ENCODE measurements at regions of chr20 and their contacts with region 1.

Region 1: DNA sequence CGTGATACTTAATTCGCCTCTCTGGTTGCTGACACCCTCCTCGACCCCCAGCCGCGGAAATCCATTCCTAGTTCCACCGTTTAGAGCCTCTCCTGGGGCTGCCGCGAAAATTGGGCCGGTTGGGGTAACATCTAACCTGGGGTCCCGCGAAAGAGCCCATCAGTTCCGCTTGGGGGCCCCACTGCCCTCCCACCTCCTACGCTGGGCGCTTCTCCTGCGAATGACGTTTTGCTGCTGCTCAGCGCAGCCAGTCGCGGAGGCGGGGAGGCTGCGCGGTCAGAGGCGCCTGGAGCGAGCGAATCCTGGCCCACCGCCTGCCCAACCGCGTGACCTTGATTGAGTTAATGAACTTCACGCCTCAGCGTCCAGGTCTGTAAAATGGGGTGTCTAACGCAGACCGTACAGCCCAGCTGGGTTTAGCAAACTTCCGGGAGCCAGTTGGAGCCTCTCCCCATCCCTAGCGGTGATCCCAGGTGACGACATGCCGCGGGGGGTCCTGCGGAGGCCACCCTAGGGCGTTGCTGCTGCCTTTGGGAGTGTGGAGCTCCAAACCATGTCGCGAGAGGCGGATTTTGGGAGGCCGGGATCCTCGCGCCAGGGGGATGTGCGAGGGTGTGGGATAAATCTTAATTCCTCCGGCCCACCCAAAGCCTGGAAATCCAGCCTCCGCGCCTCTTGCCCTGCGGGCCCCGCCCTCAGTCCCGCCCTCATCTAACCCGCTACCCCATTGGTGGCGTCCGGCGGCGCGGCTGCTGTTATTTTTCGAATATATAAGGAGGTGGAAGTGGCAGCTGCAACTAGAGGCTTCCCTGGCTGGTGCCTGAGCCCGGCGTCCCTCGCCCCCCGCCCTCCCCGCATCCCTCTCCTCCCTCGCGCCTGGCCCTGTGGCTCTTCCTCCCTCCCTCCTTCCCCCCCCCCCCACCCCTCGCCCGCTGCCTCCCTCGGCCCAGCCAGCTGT is at the start of gene CDC25B:
- DNase-seq: peak; percentile 80 to 94 (median 92)
- ATAC-seq: peak; percentile 77
- H3K4me3 ChIP-seq: peak within 1 kb of the TSS; percentile 95 to 98
- H3K4me3 Mint-ChIP-seq: peak within 1 kb of the TSS; percentile 98
- H3K27ac ChIP-seq: peak within 1 kb of the TSS; percentile 95 to 99
- H3K27ac Mint-ChIP-seq: peak within 1 kb of the TSS; percentile 98
- H3K4me1 ChIP-seq: peaks cover 37% of the 10 kb centered on the region
- H3K4me1 Mint-ChIP-seq: peaks cover 42% of the 10 kb centered on the region
- H3K27me3 ChIP-seq: no peaks in the 10 kb centered on the region
- H3K27me3 Mint-ChIP-seq: no peaks in the 10 kb centered on the region
- CTCF ChIP-seq: peak; percentile 60
- total RNA-seq, gene CDC25B: 135 to 140 TPM

Region 2: GRCh38 chr20:3670511-3670910 is 125.3 kb before region 1 on chr20:
- CTCF ChIA-PET with region 1: no interaction called
- POLR2A ChIA-PET with region 1: no interaction called
- intact Hi-C with region 1: no loop called
- DNase-seq: no peak
- ATAC-seq: no peak
- H3K4me3 ChIP-seq: no peak overlapping the region
- H3K4me3 Mint-ChIP-seq: no peak overlapping the region
- H3K27ac ChIP-seq: no peak overlapping the region
- H3K27ac Mint-ChIP-seq: no peak overlapping the region
- H3K4me1 ChIP-seq: peaks cover 9% of the 10 kb centered on the region
- H3K4me1 Mint-ChIP-seq: peaks cover 17% of the 10 kb centered on the region
- H3K27me3 ChIP-seq: peaks cover 0 to 10% of the 10 kb centered on the region in 2 experiments
- H3K27me3 Mint-ChIP-seq: peaks cover 40% of the 10 kb centered on the region
- CTCF ChIP-seq: no peak

Region 3: GRCh38 chr20:3811467-3812258 is 15.9 kb after region 1 on chr20:
- CTCF ChIA-PET with region 1: interaction called, 195 read pairs
- POLR2A ChIA-PET with region 1: interaction called, 52 read pairs
- intact Hi-C with region 1: loop called (anchors 1 kb)
- DNase-seq: peak; percentile 79 to 98 (median 95)
- ATAC-seq: peak; percentile 90
- H3K4me3 ChIP-seq: peak overlapping the region; percentile 49 to 72
- H3K4me3 Mint-ChIP-seq: peak overlapping the region; percentile 85
- H3K27ac ChIP-seq: peak overlapping the region; percentile 79 to 90
- H3K27ac Mint-ChIP-seq: peak overlapping the region; percentile 99
- H3K4me1 ChIP-seq: peaks cover 85% of the 10 kb centered on the region
- H3K4me1 Mint-ChIP-seq: peaks cover 73% of the 10 kb centered on the region
- H3K27me3 ChIP-seq: no peaks in the 10 kb centered on the region
- H3K27me3 Mint-ChIP-seq: no peaks in the 10 kb centered on the region
- CTCF ChIP-seq: no peak

Region 4: GRCh38 chr20:3820048-3820900 is 24.5 kb after region 1 on chr20 and contains the start of gene AP5S1:
- CTCF ChIA-PET with region 1: interaction called, 195 read pairs
- POLR2A ChIA-PET with region 1: interaction called, 52 read pairs
- intact Hi-C with region 1: loop called (anchors 1 kb)
- DNase-seq: peak; percentile 81 to 96 (median 89)
- ATAC-seq: peak; percentile 85
- H3K4me3 ChIP-seq: peak within 1 kb of the TSS; percentile 60 to 64
- H3K4me3 Mint-ChIP-seq: peak within 1 kb of the TSS; percentile 92
- H3K27ac ChIP-seq: peak within 1 kb of the TSS; percentile 92 to 97
- H3K27ac Mint-ChIP-seq: peak within 1 kb of the TSS; percentile 98
- H3K4me1 ChIP-seq: peaks cover 51% of the 10 kb centered on the region
- H3K4me1 Mint-ChIP-seq: peaks cover 51% of the 10 kb centered on the region
- H3K27me3 ChIP-seq: no peaks in the 10 kb centered on the region
- H3K27me3 Mint-ChIP-seq: no peaks in the 10 kb centered on the region
- CTCF ChIP-seq: peak; percentile 94
- total RNA-seq, gene AP5S1: 5.2 to 6.3 TPM

Region 5: GRCh38 chr20:3846740-3847428 is 51.1 kb after region 1 on chr20 and contains the start of gene MAVS:
- CTCF ChIA-PET with region 1: no interaction called
- POLR2A ChIA-PET with region 1: no interaction called
- intact Hi-C with region 1: loop called in 1 of 2 experiments (anchors 2 kb)
- DNase-seq: peak; percentile 67 to 92 (median 85)
- ATAC-seq: peak; percentile 97
- H3K4me3 ChIP-seq: peak within 1 kb of the TSS; percentile 76 to 87
- H3K4me3 Mint-ChIP-seq: peak within 1 kb of the TSS; percentile 87
- H3K27ac ChIP-seq: peak within 1 kb of the TSS; percentile 60 to 79
- H3K27ac Mint-ChIP-seq: peak within 1 kb of the TSS; percentile 82
- H3K4me1 ChIP-seq: peaks cover 10% of the 10 kb centered on the region
- H3K4me1 Mint-ChIP-seq: peaks cover 33% of the 10 kb centered on the region
- H3K27me3 ChIP-seq: no peaks in the 10 kb centered on the region
- H3K27me3 Mint-ChIP-seq: no peaks in the 10 kb centered on the region
- CTCF ChIP-seq: no peak
- total RNA-seq, gene MAVS: 10.0 to 10.5 TPM

Region 6: DNA sequence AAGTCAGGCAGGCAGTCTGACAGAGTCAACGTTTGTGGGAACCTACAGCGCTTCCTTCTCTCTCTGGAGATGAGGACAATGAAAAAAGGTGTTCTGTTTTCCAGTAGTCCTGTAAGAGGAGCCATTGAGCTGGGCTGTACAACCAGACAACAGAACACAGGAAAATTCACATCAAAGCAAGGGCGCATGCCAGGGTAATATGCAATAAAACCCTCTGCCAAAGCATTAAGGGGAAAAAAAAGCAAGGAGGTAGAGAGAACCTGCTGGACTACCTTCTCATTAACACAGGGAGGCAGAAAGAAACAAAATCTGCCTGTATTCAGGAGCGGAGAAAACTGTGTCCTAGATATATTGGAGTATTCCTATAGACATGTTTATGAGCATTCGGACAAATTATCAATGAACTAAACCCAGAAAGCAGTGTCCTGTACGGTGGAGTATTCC is 218.3 kb after region 1 on chr20:
- CTCF ChIA-PET with region 1: no interaction called
- POLR2A ChIA-PET with region 1: no interaction called
- intact Hi-C with region 1: loop called in 1 of 2 experiments (anchors 5 kb)
- DNase-seq: peak in 5 of 9 experiments; percentile 19 to 65 (median 34)
- ATAC-seq: no peak
- H3K4me3 ChIP-seq: peak overlapping the region in 1 of 2 experiments; percentile 3
- H3K4me3 Mint-ChIP-seq: peak overlapping the region; percentile 88
- H3K27ac ChIP-seq: peak overlapping the region in 1 of 2 experiments; percentile 23
- H3K27ac Mint-ChIP-seq: peak overlapping the region; percentile 4
- H3K4me1 ChIP-seq: peaks cover 17% of the 10 kb centered on the region
- H3K4me1 Mint-ChIP-seq: peaks cover 34% of the 10 kb centered on the region
- H3K27me3 ChIP-seq: no peaks in the 10 kb centered on the region
- H3K27me3 Mint-ChIP-seq: no peaks in the 10 kb centered on the region
- CTCF ChIP-seq: peak; percentile 35

Region 7: GRCh38 chr20:4135385-4136077 is 339.7 kb after region 1 on chr20:
- CTCF ChIA-PET with region 1: no interaction called
- POLR2A ChIA-PET with region 1: no interaction called
- intact Hi-C with region 1: no loop called
- DNase-seq: peak in 1 of 9 experiments; percentile 8
- ATAC-seq: no peak
- H3K4me3 ChIP-seq: no peak overlapping the region
- H3K4me3 Mint-ChIP-seq: no peak overlapping the region
- H3K27ac ChIP-seq: no peak overlapping the region
- H3K27ac Mint-ChIP-seq: no peak overlapping the region
- H3K4me1 ChIP-seq: no peaks in the 10 kb centered on the region
- H3K4me1 Mint-ChIP-seq: peaks cover 4% of the 10 kb centered on the region
- H3K27me3 ChIP-seq: peaks cover 0 to 3% of the 10 kb centered on the region in 2 experiments
- H3K27me3 Mint-ChIP-seq: peaks cover 11% of the 10 kb centered on the region
- CTCF ChIP-seq: no peak

Region 8: GRCh38 chr20:4813863-4814695 is 1018.3 kb after region 1 on chr20:
- CTCF ChIA-PET with region 1: no interaction called
- POLR2A ChIA-PET with region 1: no interaction called
- intact Hi-C with region 1: loop called in 1 of 2 experiments (anchors 5 kb)
- DNase-seq: peak in 8 of 9 experiments; percentile 43 to 96 (median 72)
- ATAC-seq: peak; percentile 69
- H3K4me3 ChIP-seq: peak overlapping the region; percentile 56 to 58
- H3K4me3 Mint-ChIP-seq: peak overlapping the region; percentile 86
- H3K27ac ChIP-seq: peak overlapping the region; percentile 92 to 98
- H3K27ac Mint-ChIP-seq: peak overlapping the region; percentile 100
- H3K4me1 ChIP-seq: peaks cover 65% of the 10 kb centered on the region
- H3K4me1 Mint-ChIP-seq: peaks cover 84% of the 10 kb centered on the region
- H3K27me3 ChIP-seq: no peaks in the 10 kb centered on the region
- H3K27me3 Mint-ChIP-seq: no peaks in the 10 kb centered on the region
- CTCF ChIP-seq: no peak

Measured in CD8-positive, alpha-beta T cell (primary cell).